Heart right ventricle (tissue), 16 donors: ENCODE measurements at regions of chr1 and their contacts with region 1.

Region 1: DNA sequence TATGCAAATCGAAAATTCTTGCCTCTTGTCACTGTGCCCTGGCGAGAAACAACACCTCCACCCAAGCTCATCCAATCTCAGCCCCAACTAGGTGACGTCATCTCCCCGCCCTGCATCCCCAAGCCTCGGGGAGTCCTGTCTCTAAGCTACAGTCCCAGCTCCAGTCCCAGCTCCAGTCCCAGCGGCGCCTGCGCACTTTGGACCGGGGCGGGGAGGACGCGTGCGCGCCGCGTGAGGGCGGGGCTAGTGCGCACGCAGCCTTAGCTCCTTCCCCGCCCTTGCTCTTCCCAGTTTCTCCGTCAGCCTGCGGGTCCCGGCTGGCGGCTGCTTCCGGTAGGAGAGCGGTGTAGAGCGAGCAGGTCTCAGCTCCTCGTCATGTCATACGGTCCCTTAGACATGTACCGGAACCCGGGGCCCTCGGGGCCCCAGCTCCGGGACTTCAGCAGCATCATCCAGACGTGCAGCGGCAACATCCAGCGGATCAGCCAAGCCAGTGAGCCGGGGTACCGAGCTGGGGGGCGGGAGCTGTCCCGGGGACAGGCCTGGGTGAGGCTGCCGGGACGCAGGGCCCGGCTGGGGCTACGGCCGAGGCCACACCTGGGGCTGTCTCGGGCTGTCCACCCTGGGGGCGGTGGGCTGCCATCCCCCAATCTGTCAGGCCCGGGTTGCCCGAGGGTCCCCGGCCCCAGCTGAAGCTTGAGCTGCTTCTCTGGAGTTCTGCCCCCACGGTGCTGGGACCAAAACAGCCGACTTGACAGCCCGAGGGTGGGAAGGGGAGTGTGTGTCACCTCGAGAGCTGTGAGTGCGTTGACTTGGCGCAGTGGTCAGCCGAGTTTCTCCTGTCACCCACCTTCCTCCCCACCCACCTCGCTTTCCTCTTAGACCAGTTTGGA is at the start of gene STX12:
- DNase-seq: peak; percentile 99
- ATAC-seq: peak; percentile 98 to 100 (median 99)
- H3K4me3 ChIP-seq: peak within 1 kb of the TSS; percentile 71 to 100 (median 91)
- H3K27ac ChIP-seq: peak within 1 kb of the TSS; percentile 93 to 99 (median 96)
- H3K4me1 ChIP-seq: peaks cover 0 to 52% (median 27%) of the 10 kb centered on the region in 9 donors
- H3K27me3 ChIP-seq: no peaks in the 10 kb centered on the region
- CTCF ChIP-seq: no peak
- total RNA-seq, gene STX12: 17.2 to 45.7 (median 22.5) TPM

Region 2: GRCh38 chr1:27725374-27726173 is 47.6 kb before region 1 on chr1 and contains the start of gene FAM76A:
- intact Hi-C with region 1: loop called in 3 of 10 experiments (anchors 1 to 5 kb)
- DNase-seq: peak; percentile 99 to 100
- ATAC-seq: peak; percentile 97 to 99 (median 98)
- H3K4me3 ChIP-seq: peak within 1 kb of the TSS; percentile 70 to 98 (median 93)
- H3K27ac ChIP-seq: peak within 1 kb of the TSS; percentile 83 to 98 (median 92)
- H3K4me1 ChIP-seq: peaks cover 0 to 20% (median 16%) of the 10 kb centered on the region in 9 donors
- H3K27me3 ChIP-seq: no peaks in the 10 kb centered on the region
- CTCF ChIP-seq: peak in 8 of 9 donors; percentile 39 to 78 (median 64)
- total RNA-seq, gene FAM76A: 9.6 to 15.1 (median 13.1) TPM

Region 3: GRCh38 chr1:27789540-27790041 is 16.4 kb after region 1 on chr1:
- intact Hi-C with region 1: loop called in 2 of 10 experiments (anchors 2 kb)
- DNase-seq: peak in 1 of 2 donors; percentile 66
- ATAC-seq: peak; percentile 91 to 95 (median 93)
- H3K4me3 ChIP-seq: no peak overlapping the region
- H3K27ac ChIP-seq: peak overlapping the region in 9 of 10 donors; percentile 20 to 67 (median 42)
- H3K4me1 ChIP-seq: peaks cover 0 to 63% (median 47%) of the 10 kb centered on the region in 9 donors
- H3K27me3 ChIP-seq: no peaks in the 10 kb centered on the region
- CTCF ChIP-seq: no peak